Endothelial cell of umbilical vein (primary cell): ENCODE measurements at regions of chr7 and their contacts with region 1.

Region 1: GRCh38 chr7:128425850-128426249 is 16.1 kb upstream of the IMPDH1 start:
- DNase-seq: peak; percentile 69
- H3K4me3 ChIP-seq: no peak overlapping the region
- H3K27ac ChIP-seq: no peak overlapping the region
- H3K4me1 ChIP-seq: no peaks in the 10 kb centered on the region
- H3K27me3 ChIP-seq: no peaks in the 10 kb centered on the region
- CTCF ChIP-seq: peak; percentile 87 to 93
- POLR2A ChIP-seq: no peak

Region 2: GRCh38 chr7:128108641-128109423 is 317.0 kb before region 1 on chr7:
- CTCF ChIA-PET with region 1: no interaction called
- POLR2A ChIA-PET with region 1: no interaction called
- dilution Hi-C with region 1: no loop called
- intact Hi-C with region 1: no loop called
- DNase-seq: no peak
- H3K4me3 ChIP-seq: no peak overlapping the region
- H3K27ac ChIP-seq: no peak overlapping the region
- H3K4me1 ChIP-seq: peaks cover under 1% of the 10 kb centered on the region
- H3K27me3 ChIP-seq: peaks cover 10 to 27% of the 10 kb centered on the region in 2 experiments
- CTCF ChIP-seq: no peak
- POLR2A ChIP-seq: no peak

Region 3: DNA sequence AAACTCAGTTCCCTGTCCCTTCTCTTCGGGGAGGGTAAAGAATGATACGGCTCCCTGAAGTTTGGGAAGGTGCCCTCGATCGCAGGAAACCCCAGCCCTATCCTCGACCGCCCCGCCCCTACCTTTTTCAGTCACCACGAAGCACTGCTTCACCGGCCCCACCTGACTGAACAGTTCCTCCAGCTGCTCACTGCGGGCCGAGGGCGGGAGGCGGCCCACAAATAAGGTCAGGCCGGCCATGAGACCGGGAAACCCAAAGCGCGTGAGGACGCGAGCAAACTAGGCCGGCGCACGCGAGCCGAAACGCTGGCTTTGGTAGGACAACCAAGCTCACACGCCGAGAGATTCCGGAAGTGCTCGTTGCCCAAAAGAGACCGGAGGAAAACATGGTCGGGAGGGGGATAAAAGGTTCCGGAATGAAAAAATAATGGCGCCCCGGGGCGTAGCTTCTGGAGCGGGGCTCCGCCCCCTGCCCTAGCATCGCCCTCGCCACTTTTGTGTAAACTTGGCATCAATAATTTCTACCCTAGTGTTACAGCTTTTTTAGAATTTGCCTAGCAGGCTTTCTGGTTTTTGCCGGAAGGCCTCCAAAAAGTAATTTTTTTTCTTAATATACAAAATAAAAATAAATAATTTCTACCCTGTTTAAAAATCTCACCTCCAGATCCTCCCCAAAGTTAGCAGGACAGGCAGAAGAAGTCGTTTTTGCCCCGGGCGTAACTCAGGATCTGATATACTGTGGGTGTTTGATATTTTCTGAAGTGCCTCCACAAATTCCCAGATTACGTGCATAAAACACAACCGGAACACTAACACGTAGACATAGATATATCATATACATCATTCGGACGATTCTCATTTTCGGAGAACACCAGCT is 82.1 kb before region 1 on chr7 and contains the start of gene RBM28:
- CTCF ChIA-PET with region 1: interaction called, 96 read pairs
- POLR2A ChIA-PET with region 1: no interaction called
- dilution Hi-C with region 1: no loop called
- intact Hi-C with region 1: loop called (anchors 1 kb)
- DNase-seq: peak; percentile 89
- H3K4me3 ChIP-seq: peak within 1 kb of the TSS; percentile 53 to 98 (median 85)
- H3K27ac ChIP-seq: peak within 1 kb of the TSS; percentile 21
- H3K4me1 ChIP-seq: peaks cover 10% of the 10 kb centered on the region
- H3K27me3 ChIP-seq: peaks cover 2 to 4% of the 10 kb centered on the region in 2 experiments
- CTCF ChIP-seq: no peak
- POLR2A ChIP-seq: peak; percentile 93
- total RNA-seq, gene RBM28: 58.5 and 58.7 TPM in 2 replicates

Region 4: GRCh38 chr7:128387216-128388144 is 38.4 kb before region 1 on chr7:
- CTCF ChIA-PET with region 1: interaction called, 18 read pairs
- POLR2A ChIA-PET with region 1: no interaction called
- dilution Hi-C with region 1: no loop called
- intact Hi-C with region 1: no loop called
- DNase-seq: peak; percentile 71
- H3K4me3 ChIP-seq: no peak overlapping the region
- H3K27ac ChIP-seq: no peak overlapping the region
- H3K4me1 ChIP-seq: no peaks in the 10 kb centered on the region
- H3K27me3 ChIP-seq: peaks cover 0 to 5% of the 10 kb centered on the region in 2 experiments
- CTCF ChIP-seq: peak; percentile 75 to 92
- POLR2A ChIP-seq: no peak

Region 5: DNA sequence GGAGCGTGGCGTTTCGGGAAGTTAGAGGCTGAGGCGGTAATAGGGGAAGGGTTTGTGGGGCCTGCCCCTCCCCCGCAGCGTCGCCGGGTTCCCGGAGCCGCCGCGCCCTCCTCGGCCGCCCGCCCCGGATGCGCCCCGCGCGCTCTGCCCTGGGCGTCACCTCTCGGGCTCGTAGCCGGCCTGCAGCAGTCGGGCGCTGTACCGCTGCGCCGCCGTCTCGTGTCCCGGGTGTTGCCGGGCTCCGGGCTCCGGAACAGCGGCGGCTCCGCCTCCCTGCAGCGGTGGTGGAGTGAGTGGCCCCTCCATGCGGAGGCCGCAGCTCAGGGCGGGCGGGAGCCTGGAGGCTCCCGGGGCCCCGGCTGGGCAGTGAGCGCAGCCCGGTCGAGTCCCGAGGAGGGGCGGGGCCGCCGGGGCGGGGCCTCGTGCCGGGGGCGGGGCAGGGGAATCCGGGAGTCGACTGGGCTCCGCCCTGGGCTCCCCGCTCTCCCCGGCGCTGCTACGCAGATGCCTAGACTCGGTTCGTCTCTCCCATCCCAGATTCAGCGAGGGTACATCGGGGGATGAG is 16.2 kb before region 1 on chr7 and contains the start of gene IMPDH1:
- CTCF ChIA-PET with region 1: interaction called, 209 read pairs
- POLR2A ChIA-PET with region 1: no interaction called
- dilution Hi-C with region 1: no loop called
- intact Hi-C with region 1: loop called (anchors 1 kb)
- DNase-seq: no peak
- H3K4me3 ChIP-seq: peak within 1 kb of the TSS; percentile 74 to 84 (median 83)
- H3K27ac ChIP-seq: no peak within 1 kb of the TSS
- H3K4me1 ChIP-seq: peaks cover 18% of the 10 kb centered on the region
- H3K27me3 ChIP-seq: peaks cover 2 to 6% of the 10 kb centered on the region in 2 experiments
- CTCF ChIP-seq: no peak
- POLR2A ChIP-seq: peak; percentile 71
- total RNA-seq, gene IMPDH1: 91.7 and 97.9 TPM in 2 replicates

Region 6: DNA sequence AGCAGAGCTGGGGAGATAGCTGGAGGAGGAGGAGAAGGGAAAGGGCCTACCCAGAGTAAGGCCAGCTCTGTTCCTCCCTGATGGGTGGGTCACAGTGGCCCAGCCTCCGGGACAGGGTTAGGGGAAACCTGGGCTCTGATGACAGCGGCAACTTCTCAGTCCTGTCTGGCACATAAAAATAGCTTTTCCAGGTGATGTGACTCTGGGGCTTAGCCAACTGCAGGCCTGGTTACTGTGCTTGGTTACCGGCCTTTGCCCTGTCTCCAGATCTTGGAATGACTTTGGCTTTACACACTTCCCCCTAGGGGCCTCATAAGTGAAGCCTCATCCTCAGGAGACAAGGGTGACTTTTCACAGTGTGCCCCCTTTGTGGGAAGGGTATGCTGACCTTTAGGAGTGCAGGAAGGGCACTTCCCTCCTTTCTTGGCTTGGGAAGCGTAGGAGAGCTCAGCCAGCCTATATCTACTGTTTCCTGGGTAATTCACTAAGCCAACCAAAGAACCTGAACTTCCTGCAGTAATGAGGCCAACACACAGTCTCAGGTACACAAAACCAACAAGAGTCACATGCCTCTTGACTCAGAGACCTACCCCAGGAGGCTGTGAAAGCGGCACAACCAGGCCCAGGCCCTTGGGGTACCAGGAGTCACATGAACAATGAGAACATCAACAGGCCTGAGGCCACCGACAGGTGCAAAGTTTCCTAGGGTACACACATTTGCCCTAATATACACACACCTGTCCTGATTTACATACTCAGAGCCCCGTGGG is 18.2 kb after region 1 on chr7:
- CTCF ChIA-PET with region 1: interaction called, 39 read pairs
- POLR2A ChIA-PET with region 1: no interaction called
- dilution Hi-C with region 1: no loop called
- intact Hi-C with region 1: no loop called
- DNase-seq: no peak
- H3K4me3 ChIP-seq: no peak overlapping the region
- H3K27ac ChIP-seq: no peak overlapping the region
- H3K4me1 ChIP-seq: no peaks in the 10 kb centered on the region
- H3K27me3 ChIP-seq: peaks cover 0 to 5% of the 10 kb centered on the region in 2 experiments
- CTCF ChIP-seq: no peak
- POLR2A ChIP-seq: no peak

Region 7: GRCh38 chr7:128462460-128462859 is 36.6 kb after region 1 on chr7:
- CTCF ChIA-PET with region 1: interaction called, 632 read pairs
- POLR2A ChIA-PET with region 1: interaction called, 6 read pairs
- dilution Hi-C with region 1: no loop called
- intact Hi-C with region 1: loop called (anchors 1 kb)
- DNase-seq: no peak
- H3K4me3 ChIP-seq: no peak overlapping the region
- H3K27ac ChIP-seq: no peak overlapping the region
- H3K4me1 ChIP-seq: peaks cover 3% of the 10 kb centered on the region
- H3K27me3 ChIP-seq: no peaks in the 10 kb centered on the region
- CTCF ChIP-seq: no peak
- POLR2A ChIP-seq: no peak